ENCODE measurements at regions of chr1 and their contacts with region 1.

Region 1: DNA sequence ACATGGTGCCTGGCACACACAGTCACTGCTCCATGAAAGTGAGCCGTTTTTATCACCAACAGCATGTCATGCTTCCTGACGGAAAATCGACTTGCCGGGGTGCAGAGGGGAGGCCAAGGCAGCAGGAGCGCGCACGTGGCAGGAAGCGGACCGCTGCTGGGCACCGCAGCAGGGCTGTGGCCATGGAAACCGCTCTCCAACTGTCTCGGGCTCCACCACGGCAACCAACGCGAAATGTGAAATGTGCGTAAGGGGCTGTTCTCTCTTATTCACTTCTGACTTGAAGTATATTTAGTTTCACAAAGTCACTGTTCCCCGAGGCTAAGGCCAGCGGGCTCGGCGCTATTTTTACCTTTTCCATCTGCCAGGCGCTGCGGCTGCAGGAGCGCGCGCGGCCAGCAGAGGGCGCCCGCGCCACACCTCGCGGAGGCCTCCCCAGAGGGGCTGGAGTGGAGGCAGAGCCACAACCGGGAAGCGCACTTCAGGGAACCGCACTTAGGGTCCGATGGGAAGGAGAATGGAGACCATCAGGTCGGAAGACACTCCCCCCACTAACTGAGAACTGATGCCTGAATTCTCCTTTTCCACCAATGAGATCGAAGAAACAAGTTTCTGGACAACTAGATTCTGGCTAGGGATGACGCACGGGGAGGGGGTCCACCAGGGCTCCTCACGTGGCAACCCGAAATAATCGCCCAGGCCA is 19.7 kb downstream of the RCC2 start:
- DNase-seq: peak; percentile 33
- H3K4me3 Mint-ChIP-seq: no peak overlapping the region
- H3K27ac Mint-ChIP-seq: peak overlapping the region; percentile 61
- H3K4me1 Mint-ChIP-seq: peaks cover 11% of the 10 kb centered on the region
- H3K27me3 Mint-ChIP-seq: no peaks in the 10 kb centered on the region

Region 2: GRCh38 chr1:17439250-17440073 is 19.7 kb after region 1 on chr1 and contains the start of gene RCC2:
- intact Hi-C with region 1: loop called (anchors 2 kb)
- DNase-seq: peak; percentile 66
- H3K4me3 Mint-ChIP-seq: peak within 1 kb of the TSS; percentile 94
- H3K27ac Mint-ChIP-seq: peak within 1 kb of the TSS; percentile 98
- H3K4me1 Mint-ChIP-seq: peaks cover 40% of the 10 kb centered on the region
- H3K27me3 Mint-ChIP-seq: no peaks in the 10 kb centered on the region
- total RNA-seq, gene RCC2: 238 and 246 TPM in 2 replicates

Region 3: GRCh38 chr1:17485280-17485679 is 65.5 kb after region 1 on chr1:
- intact Hi-C with region 1: loop called (anchors 10 kb)
- DNase-seq: no peak
- H3K4me3 Mint-ChIP-seq: no peak overlapping the region
- H3K27ac Mint-ChIP-seq: no peak overlapping the region
- H3K4me1 Mint-ChIP-seq: no peaks in the 10 kb centered on the region
- H3K27me3 Mint-ChIP-seq: peaks cover 2% of the 10 kb centered on the region

Region 4: DNA sequence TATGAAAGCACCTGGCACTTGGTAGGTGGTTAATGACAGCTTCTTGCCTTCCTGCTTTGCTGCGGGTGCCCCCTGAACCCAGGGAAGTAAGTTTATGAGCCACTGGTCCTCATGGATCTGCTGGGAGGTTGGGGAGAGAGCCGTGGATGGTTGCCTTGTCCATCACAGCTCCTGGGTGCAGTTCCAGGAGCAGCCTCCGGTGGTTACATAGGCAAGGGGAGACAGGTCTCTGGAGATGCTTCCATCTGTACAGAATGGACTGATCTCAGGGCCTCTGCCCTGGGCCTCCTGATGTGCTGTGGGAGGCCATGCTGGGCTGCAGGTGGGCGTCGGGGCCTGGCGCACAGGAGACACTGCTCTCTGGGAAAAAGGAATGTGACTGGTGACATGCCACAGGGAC is 88.1 kb after region 1 on chr1:
- intact Hi-C with region 1: no loop called
- DNase-seq: no peak
- H3K4me3 Mint-ChIP-seq: no peak overlapping the region
- H3K27ac Mint-ChIP-seq: no peak overlapping the region
- H3K4me1 Mint-ChIP-seq: no peaks in the 10 kb centered on the region
- H3K27me3 Mint-ChIP-seq: peaks cover 3% of the 10 kb centered on the region